Activated naive CD4-positive, alpha-beta T cell treated with anti-CD3 and anti-CD28 coated beads for 36 hours (primary cell): ENCODE measurements at regions of chr21 and their contacts with region 1.

Region 1: GRCh38 chr21:33976082-33977016 is 60.7 kb upstream of the ATP5PO start:
- DNase-seq: peak; percentile 83
- H3K4me3 Mint-ChIP-seq: peak overlapping the region; percentile 70
- H3K27ac Mint-ChIP-seq: peak overlapping the region; percentile 99
- H3K4me1 Mint-ChIP-seq: peaks cover 52% of the 10 kb centered on the region
- H3K27me3 Mint-ChIP-seq: no peaks in the 10 kb centered on the region

Region 2: GRCh38 chr21:33229784-33230544 is 746.4 kb before region 1 on chr21 and contains the start of gene IFNAR2:
- CTCF ChIA-PET with region 1: no interaction called
- intact Hi-C with region 1: loop called (anchors 10 kb)
- DNase-seq: peak; percentile 73
- H3K4me3 Mint-ChIP-seq: peak within 1 kb of the TSS; percentile 89
- H3K27ac Mint-ChIP-seq: peak within 1 kb of the TSS; percentile 92
- H3K4me1 Mint-ChIP-seq: peaks cover 52% of the 10 kb centered on the region
- H3K27me3 Mint-ChIP-seq: no peaks in the 10 kb centered on the region
- total RNA-seq, gene IFNAR2: 16.6 to 19.4 TPM

Region 3: GRCh38 chr21:33881689-33882440 is 94.5 kb before region 1 on chr21:
- CTCF ChIA-PET with region 1: no interaction called
- intact Hi-C with region 1: no loop called
- DNase-seq: no peak
- H3K4me3 Mint-ChIP-seq: no peak overlapping the region
- H3K27ac Mint-ChIP-seq: no peak overlapping the region
- H3K4me1 Mint-ChIP-seq: no peaks in the 10 kb centered on the region
- H3K27me3 Mint-ChIP-seq: peaks cover 2% of the 10 kb centered on the region

Region 4: DNA sequence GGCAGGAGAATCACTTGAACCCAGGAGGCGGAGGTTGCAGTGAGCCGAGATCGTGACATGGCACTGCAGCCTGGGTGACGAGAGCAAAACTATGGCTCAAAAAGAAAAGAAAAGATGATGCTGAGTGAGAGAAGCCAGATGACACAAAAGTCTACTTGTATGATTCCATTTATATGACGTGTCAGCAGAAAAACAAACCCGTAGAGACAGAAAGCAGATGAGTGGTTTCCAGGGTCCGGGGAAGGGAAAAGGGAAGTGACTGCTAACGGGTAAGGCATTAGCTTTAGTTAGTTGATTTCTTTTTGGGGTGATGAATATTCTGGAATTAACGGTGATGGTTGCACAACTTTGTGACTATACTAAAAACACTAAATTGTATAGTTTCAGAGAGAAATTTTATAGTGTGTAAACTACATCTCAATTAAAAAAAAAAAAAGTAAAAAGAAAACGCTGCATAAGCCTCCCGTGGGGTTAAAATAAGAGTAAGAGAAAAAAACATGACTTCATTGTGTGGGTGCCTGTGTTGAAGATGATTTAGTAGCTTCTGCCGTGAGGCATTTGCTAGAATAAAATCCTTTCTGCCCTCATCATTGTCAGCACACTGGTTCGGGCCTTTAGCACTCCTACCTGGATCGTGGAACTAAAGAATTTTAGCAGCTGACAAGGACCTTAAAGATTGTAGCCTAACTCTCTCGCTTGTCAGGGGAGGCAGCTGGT is 36.0 kb before region 1 on chr21:
- CTCF ChIA-PET with region 1: interaction called, 4 read pairs
- intact Hi-C with region 1: loop called (anchors 1 kb)
- DNase-seq: no peak
- H3K4me3 Mint-ChIP-seq: no peak overlapping the region
- H3K27ac Mint-ChIP-seq: peak overlapping the region; percentile 75
- H3K4me1 Mint-ChIP-seq: peaks cover 75% of the 10 kb centered on the region
- H3K27me3 Mint-ChIP-seq: no peaks in the 10 kb centered on the region

Region 5: GRCh38 chr21:34029743-34030528 is 53.6 kb after region 1 on chr21:
- CTCF ChIA-PET with region 1: interaction called, 3 read pairs
- intact Hi-C with region 1: loop called (anchors 1 kb)
- DNase-seq: peak; percentile 72
- H3K4me3 Mint-ChIP-seq: peak overlapping the region; percentile 29
- H3K27ac Mint-ChIP-seq: peak overlapping the region; percentile 85
- H3K4me1 Mint-ChIP-seq: peaks cover 24% of the 10 kb centered on the region
- H3K27me3 Mint-ChIP-seq: no peaks in the 10 kb centered on the region

Region 6: DNA sequence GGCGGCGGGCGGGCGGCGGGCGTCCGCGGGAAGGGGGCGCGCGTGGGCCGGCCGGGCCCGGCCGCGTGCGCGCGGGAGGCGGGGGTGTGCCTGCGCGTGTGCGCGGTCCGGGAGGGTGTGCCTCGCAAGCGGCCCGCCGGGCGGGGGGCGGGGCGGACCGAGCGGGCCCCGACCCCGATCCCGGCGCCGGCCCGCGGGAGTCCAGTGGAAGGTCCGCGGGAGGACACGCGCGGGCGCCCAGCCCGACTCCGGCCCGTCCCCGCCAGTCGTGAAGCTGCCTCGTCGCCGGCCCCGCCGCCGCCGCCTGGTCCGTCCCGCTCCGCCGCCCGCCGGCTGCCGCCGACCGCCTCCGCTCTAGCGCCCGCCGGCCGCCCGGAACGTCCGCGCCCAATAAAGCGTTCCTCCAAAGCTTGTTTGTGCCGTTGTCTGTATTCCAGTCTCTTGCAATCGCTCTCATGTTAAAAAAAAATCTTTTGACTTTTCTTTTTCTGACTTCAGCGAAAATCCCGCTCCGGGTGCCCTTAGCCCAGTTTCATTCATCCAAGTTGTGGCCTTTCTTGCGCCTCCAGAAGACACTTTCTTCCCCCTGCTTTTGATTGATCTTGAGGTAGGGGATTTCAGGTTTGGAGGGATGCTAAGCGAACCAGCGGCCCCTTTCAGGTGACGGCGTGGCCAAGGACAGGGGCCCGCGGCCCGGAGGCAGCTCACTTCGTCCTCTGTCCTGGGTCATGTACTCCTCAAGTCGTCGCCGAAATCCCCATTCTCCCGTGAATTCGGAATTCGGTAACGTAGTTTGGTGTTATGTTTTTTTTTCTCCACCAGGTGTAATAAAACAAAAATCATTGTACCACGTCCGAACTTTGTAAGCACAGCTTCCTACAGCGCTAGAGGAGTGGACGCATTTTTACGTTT is 97.8 kb after region 1 on chr21:
- CTCF ChIA-PET with region 1: interaction called, 5 read pairs
- intact Hi-C with region 1: loop called (anchors 1 kb)
- DNase-seq: peak; percentile 24
- H3K4me3 Mint-ChIP-seq: peak overlapping the region; percentile 88
- H3K27ac Mint-ChIP-seq: peak overlapping the region; percentile 86
- H3K4me1 Mint-ChIP-seq: peaks cover 46% of the 10 kb centered on the region
- H3K27me3 Mint-ChIP-seq: no peaks in the 10 kb centered on the region